ENCODE measurements at regions of chr1 and their contacts with region 1.

Region 1: GRCh38 chr1:75724472-75725022 is at the start of gene ACADM:
- DNase-seq: peak; percentile 84
- H3K4me3 Mint-ChIP-seq: peak within 1 kb of the TSS; percentile 100
- H3K27ac Mint-ChIP-seq: peak within 1 kb of the TSS; percentile 97
- H3K4me1 Mint-ChIP-seq: peaks cover 30% of the 10 kb centered on the region
- H3K27me3 Mint-ChIP-seq: no peaks in the 10 kb centered on the region
- total RNA-seq, gene ACADM: 53.2 and 54.8 TPM in 2 replicates

Region 2: DNA sequence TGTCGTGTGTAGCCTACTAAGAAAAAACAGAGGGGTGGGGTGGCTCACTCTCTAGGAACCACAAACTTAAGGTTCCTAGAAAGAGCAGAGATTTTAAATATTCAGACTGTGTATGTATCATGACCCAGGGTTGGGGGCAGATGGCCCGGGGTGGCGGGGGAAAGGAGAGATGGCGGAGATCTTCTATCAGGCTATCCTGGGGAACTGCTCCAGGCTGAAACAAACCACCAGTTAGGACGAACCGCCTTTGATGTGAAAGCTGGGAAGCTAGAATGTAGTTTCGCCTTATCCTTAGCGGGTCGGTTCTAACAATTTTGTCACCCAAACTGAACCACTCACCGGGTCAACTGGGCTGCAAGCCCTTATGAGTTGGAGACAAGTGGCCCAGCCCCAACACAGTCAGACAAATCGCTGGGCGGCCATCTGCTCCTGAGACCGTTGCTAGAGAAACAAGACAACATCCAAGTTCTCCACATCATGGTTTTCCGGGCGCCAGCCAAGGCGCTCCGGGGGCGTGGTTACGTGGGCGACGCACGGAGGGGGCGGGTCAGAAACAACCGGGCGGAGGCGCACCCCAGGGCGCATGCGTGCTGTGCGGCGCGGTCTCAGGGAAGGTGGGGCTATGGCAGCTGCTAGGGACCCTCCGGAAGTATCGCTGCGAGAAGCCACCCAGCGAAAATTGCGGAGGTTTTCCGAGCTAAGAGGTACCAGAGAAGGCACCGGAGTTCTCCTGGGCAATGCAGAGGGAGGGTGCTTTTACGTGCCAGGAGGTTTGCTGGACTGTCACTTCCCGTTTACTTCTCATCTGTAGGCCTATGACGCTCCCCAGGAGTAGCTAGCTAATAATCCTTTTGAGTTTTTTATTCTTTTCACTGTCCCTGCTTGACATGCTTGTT is 1526.6 kb before region 1 on chr1 and contains the starts of genes FPGT and LRRIQ3:
- intact Hi-C with region 1: loop called (anchors 2 kb)
- DNase-seq: peak; percentile 93
- H3K4me3 Mint-ChIP-seq: peak within 1 kb of the TSS; percentile 92
- H3K27ac Mint-ChIP-seq: peak within 1 kb of the TSS; percentile 92
- H3K4me1 Mint-ChIP-seq: peaks cover 16% of the 10 kb centered on the region
- H3K27me3 Mint-ChIP-seq: no peaks in the 10 kb centered on the region
- total RNA-seq, gene FPGT: 6.5 and 8.3 TPM in 2 replicates
- total RNA-seq, gene LRRIQ3: 0.31 and 0.49 TPM in 2 replicates

Region 3: DNA sequence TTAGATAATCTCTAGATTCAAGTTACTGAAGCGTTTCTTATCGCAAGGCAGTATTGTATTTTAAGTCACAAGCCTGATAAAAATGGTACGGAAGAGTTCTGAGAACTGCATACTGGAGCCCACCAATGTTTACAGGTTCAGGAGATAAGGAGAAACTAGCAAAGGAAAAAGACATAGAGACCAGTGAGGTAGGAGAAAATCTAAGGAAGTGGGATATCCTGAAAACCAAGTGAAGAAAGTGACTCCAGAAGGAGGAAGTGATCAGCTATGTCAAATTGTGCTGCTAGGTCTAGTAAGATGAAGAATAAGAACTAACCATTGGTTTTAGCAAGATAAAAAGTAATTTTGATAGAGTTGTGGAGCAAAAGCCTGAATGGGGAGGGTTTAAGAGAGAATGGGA is 31.0 kb before region 1 on chr1:
- intact Hi-C with region 1: no loop called
- DNase-seq: no peak
- H3K4me3 Mint-ChIP-seq: no peak overlapping the region
- H3K27ac Mint-ChIP-seq: no peak overlapping the region
- H3K4me1 Mint-ChIP-seq: no peaks in the 10 kb centered on the region
- H3K27me3 Mint-ChIP-seq: no peaks in the 10 kb centered on the region

Region 4: GRCh38 chr1:75785983-75786853 is 61.7 kb after region 1 on chr1 and contains the start of gene RABGGTB:
- intact Hi-C with region 1: loop called (anchors 1 kb)
- DNase-seq: peak; percentile 93
- H3K4me3 Mint-ChIP-seq: peak within 1 kb of the TSS; percentile 97
- H3K27ac Mint-ChIP-seq: peak within 1 kb of the TSS; percentile 99
- H3K4me1 Mint-ChIP-seq: peaks cover 46% of the 10 kb centered on the region
- H3K27me3 Mint-ChIP-seq: peaks cover 1% of the 10 kb centered on the region
- total RNA-seq, gene RABGGTB: 233 and 240 TPM in 2 replicates

Region 5: GRCh38 chr1:75980972-75981897 is 256.7 kb after region 1 on chr1:
- intact Hi-C with region 1: no loop called
- DNase-seq: no peak
- H3K4me3 Mint-ChIP-seq: no peak overlapping the region
- H3K27ac Mint-ChIP-seq: no peak overlapping the region
- H3K4me1 Mint-ChIP-seq: no peaks in the 10 kb centered on the region
- H3K27me3 Mint-ChIP-seq: peaks cover 2% of the 10 kb centered on the region

Region 6: DNA sequence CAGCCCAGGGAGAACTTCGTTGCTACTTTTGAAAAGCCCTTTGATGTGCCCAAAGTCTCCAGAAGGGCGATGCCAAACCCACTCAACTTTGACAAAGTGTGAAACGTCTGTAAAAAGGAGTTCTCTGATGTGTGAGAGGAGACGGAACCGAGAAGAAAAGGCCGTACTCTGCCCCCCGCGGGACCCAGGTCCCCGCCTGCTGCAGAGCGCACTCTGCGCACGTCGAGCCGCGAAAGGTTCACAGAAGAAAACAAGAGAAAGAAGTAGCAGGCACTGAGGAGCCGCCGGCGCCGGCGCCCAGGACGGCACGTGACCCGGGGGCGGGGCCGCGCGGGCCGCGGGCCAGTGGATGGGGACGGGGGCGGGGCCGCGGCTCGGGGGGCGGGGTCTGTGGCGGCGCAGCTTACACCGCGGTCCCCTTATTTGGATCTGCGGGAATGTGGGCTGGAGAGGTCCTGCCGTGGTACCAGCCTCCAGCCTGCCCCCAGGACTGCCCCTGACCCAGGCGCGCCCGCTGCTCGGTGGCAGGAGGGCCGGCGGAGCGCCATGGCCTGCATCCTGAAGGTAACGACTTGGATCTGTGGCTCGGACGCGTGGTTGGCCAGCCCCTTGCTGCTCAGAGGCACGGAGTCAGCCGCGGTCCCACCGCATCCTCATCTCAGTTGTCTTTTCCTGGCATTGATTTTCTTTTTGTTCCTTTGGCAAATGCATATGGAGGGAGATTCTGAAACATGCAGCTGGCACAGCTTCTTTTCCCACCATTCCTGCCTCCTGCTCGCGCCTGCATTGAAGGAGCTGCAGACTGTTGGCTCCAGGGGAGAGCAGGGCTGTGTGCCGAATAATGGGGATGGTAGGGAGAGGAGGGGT is 350.0 kb after region 1 on chr1 and contains the start of gene ST6GALNAC3:
- intact Hi-C with region 1: loop called (anchors 2 kb)
- DNase-seq: peak; percentile 71
- H3K4me3 Mint-ChIP-seq: peak within 1 kb of the TSS; percentile 84
- H3K27ac Mint-ChIP-seq: peak within 1 kb of the TSS; percentile 49
- H3K4me1 Mint-ChIP-seq: peaks cover 10% of the 10 kb centered on the region
- H3K27me3 Mint-ChIP-seq: peaks cover 25% of the 10 kb centered on the region
- total RNA-seq, gene ST6GALNAC3: not detected in 2 replicates

Region 7: DNA sequence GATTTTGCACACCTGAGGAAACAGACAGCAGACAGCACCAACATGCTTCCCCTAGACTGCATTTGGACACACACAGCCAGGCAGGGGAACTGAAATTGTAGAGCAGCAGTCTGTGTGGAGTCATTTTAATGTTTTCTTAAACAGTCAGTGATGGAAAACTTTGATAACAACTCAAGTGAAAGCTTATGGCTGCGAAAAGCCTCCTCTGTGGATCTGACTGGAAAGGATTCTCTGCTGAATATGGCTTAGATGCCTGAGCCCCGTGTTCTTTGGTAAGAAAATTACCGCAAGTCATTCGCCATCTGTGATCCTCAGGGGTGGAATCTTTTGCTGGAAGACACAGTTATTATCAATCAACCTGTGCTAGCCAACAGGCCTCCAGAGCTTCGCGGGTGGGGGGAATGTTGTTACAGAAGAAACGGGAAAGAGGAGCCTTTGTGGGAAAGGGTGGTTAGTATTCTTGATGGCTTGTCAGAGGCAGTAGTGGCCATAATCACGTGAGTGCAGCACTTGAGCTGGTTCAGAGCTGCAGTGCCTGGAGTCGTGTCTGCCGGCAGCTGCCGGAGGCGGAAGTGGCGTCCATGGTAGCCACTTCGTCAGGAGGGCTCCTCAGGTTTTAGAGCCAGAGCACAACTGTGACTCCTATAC is 554.7 kb after region 1 on chr1:
- intact Hi-C with region 1: loop called (anchors 10 kb)
- DNase-seq: no peak
- H3K4me3 Mint-ChIP-seq: no peak overlapping the region
- H3K27ac Mint-ChIP-seq: no peak overlapping the region
- H3K4me1 Mint-ChIP-seq: peaks cover 4% of the 10 kb centered on the region
- H3K27me3 Mint-ChIP-seq: peaks cover 1% of the 10 kb centered on the region

Measured in activated T-helper 1 cell treated with anti-CD3 and anti-CD28 coated beads, Interleukin-12 subunit alpha, Interleukin-12 subunit beta, Interleukin-2, Interleukin-4 antibody, amounts not matched to agents 30 ng/mL and 10 ng/mL and 1 ng/mL, durations not matched to agents 14 hours and 24 hours and 36 hours (primary cell).